A549 (cell line): ENCODE measurements at regions of chr18 and their contacts with region 1.

Region 1: DNA sequence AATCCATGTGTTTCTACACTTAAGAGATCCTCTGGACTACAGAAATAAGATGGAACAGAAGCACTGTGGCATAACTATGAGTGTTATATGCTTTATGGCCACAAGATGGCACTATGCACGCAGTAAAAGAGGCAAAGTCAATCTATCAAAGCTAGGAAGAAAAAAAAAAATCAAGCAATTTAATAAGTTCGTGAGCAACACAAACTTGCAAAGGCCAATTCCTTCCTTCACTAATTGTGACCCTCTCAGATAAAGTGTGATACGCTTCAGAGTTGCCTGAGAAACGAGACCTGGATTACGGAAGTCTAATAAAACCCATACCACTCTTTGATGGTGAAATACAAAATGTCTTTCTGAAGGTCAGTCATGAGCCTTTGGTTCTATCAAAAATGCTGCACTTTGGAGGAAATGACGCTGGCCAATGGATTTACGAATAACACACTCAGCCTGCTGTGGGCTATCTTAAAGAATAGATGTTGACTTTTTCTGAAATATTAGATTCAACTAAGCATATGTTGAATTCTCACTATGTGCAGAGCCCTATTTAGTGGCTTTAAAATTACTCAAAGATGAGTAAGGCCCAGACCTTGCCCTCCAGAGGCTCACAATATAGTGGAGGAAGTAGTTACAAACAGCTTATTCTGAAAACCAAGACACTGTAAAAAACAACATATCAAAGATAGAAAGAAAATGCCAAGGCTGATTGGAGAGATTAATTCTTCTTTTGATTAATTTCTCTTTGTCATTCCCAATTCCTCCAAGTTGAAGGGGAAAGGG is 35.5 kb upstream of the TTR start:
- DNase-seq: peak; percentile 25 to 58
- ATAC-seq: peak; percentile 75 to 86; a peak in 5 of 6 replicates
- H3K4me3 ChIP-seq: no peak overlapping the region
- H3K27ac ChIP-seq: no peak overlapping the region
- H3K4me1 ChIP-seq: no peaks in the 10 kb centered on the region
- CTCF ChIP-seq: peak; percentile 73
- EP300 ChIP-seq: no peak
- POLR2A ChIP-seq: no peak
- RAD21 ChIP-seq: peak; percentile 81

Region 2: GRCh38 chr18:31722369-31722957 is 166.3 kb after region 1 on chr18:
- CTCF ChIA-PET with region 1: interaction called, 17 read pairs
- POLR2A ChIA-PET with region 1: no interaction called
- DNase-seq: peak; percentile 61 to 69
- ATAC-seq: peak; percentile 94 to 98
- H3K4me3 ChIP-seq: no peak overlapping the region
- H3K27ac ChIP-seq: no peak overlapping the region
- H3K4me1 ChIP-seq: no peaks in the 10 kb centered on the region
- CTCF ChIP-seq: peak; percentile 64
- EP300 ChIP-seq: no peak
- POLR2A ChIP-seq: no peak
- RAD21 ChIP-seq: peak; percentile 56 to 62

Region 3: DNA sequence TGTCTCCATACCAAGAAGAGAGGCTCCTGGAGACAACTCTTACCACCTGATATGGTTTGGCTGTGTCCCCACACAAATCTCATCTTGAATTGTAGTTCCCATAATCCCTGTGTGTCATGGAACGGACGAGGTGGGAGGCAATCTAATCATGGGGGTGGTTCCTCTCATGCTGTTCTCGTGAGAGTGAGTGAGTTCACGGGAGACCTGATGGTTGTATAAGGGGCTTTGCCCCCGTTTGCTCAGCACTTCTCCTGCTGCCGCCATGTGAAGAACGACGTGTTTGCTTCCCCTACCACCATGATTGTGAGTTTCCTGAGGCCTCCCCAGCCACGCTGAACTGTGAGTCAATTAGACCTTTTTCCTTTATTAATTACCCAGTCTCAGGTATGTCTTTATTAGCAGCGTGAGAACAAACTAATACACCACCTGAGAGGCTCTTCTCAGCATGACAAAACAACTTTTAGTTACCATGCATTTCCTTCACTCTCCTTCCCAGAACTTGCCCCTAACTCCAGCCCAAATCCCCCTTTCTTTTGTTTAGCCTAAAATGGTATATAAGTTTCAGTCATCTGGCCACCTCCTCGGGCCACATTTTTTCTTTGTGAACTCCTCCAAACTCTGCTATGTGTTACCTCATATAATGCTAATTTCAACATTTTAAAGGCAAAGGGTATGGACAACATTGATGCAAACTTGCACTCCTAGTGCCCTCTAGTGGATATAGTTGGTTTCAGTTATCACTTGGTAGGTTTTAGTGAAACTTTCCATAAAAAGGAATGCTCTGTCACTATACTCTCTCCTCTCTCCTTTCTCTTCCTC is 263.2 kb after region 1 on chr18:
- CTCF ChIA-PET with region 1: interaction called, 15 read pairs
- POLR2A ChIA-PET with region 1: no interaction called
- DNase-seq: peak; percentile 2 to 44
- ATAC-seq: peak; percentile 76 to 80; a peak in 5 of 6 replicates
- H3K4me3 ChIP-seq: no peak overlapping the region
- H3K27ac ChIP-seq: no peak overlapping the region
- H3K4me1 ChIP-seq: no peaks in the 10 kb centered on the region
- CTCF ChIP-seq: peak; percentile 65
- EP300 ChIP-seq: no peak
- POLR2A ChIP-seq: no peak
- RAD21 ChIP-seq: peak; percentile 63 to 65